ENCODE measurements at regions of chr5 and their contacts with region 1.

Region 1: GRCh38 chr5:115377468-115378217 is 81.2 kb upstream of the CCDC112 start:
- DNase-seq: no peak
- ATAC-seq: peak; percentile 73 to 78
- H3K4me3 ChIP-seq: no peak overlapping the region
- H3K27ac ChIP-seq: no peak overlapping the region
- H3K4me1 ChIP-seq: no peaks in the 10 kb centered on the region
- H3K27me3 ChIP-seq: no peaks in the 10 kb centered on the region

Region 2: GRCh38 chr5:115289104-115289503 is 88.5 kb before region 1 on chr5:
- intact Hi-C with region 1: no loop called
- DNase-seq: no peak
- ATAC-seq: no peak
- H3K4me3 ChIP-seq: no peak overlapping the region
- H3K27ac ChIP-seq: no peak overlapping the region
- H3K4me1 ChIP-seq: no peaks in the 10 kb centered on the region
- H3K27me3 ChIP-seq: no peaks in the 10 kb centered on the region

Region 3: DNA sequence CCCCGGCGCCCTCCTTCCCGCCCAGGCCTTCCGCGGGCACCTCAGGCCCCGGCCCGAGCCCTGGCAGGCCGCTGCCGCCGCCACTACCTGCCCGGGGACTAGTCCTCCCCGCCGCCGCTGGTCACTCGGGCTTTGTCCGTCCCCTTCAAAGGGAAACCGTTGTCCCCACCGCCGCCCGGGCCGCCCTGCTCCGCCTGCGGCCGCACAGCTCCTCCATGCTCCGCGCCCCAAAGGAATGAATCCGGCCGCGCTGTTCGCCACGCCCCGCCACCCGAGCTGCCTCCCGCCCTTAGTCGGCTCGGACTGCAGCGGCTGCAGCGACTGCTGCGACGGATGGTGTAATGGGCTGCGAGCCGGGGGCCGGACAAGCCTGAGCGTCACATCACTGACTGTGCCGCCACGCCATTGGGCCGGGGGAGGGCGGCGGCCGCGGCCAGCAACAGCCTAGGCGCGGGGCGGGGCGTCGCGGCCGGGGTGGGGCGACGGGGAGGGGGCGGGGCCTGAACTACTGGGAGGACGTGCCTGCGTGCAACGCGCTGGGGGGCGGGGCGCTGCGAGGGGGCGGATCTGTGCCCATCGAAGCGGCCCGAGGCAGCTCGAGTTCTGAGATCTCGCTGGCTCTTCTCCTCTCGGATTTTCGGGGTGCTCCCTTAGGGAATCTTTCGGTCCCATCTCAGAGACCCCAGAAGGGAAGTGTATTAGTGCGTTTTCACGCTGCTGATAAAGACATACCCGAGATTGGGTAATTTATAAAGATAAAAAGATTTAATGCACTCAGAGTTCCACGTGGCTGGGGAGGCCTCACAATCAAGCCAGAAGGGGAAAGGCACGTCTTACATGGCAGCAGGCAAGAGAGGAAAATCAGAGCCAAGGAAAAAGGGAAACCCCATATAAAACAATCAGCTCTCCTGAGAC is 167.1 kb after region 1 on chr5 and contains the start of gene FEM1C:
- intact Hi-C with region 1: loop called in 1 of 4 experiments (anchors 5 kb)
- DNase-seq: peak; percentile 98 to 99 (median 99)
- ATAC-seq: peak; percentile 99
- H3K4me3 ChIP-seq: peak within 1 kb of the TSS; percentile 72
- H3K27ac ChIP-seq: peak within 1 kb of the TSS; percentile 95
- H3K4me1 ChIP-seq: no peaks in the 10 kb centered on the region
- H3K27me3 ChIP-seq: no peaks in the 10 kb centered on the region
- total RNA-seq, gene FEM1C: 19.3 to 29.5 (median 22.1) TPM

Region 4: GRCh38 chr5:115571441-115571878 is 193.8 kb after region 1 on chr5:
- intact Hi-C with region 1: loop called in 3 of 4 experiments (anchors 5 to 10 kb)
- DNase-seq: peak in 2 of 3 donors; percentile 17 to 28
- ATAC-seq: peak; percentile 88 to 94
- H3K4me3 ChIP-seq: no peak overlapping the region
- H3K27ac ChIP-seq: no peak overlapping the region
- H3K4me1 ChIP-seq: no peaks in the 10 kb centered on the region
- H3K27me3 ChIP-seq: no peaks in the 10 kb centered on the region

Region 5: GRCh38 chr5:115579747-115580173 is 202.1 kb after region 1 on chr5:
- intact Hi-C with region 1: loop called (anchors 5 to 10 kb)
- DNase-seq: no peak
- ATAC-seq: no peak
- H3K4me3 ChIP-seq: no peak overlapping the region
- H3K27ac ChIP-seq: no peak overlapping the region
- H3K4me1 ChIP-seq: peaks cover 3% of the 10 kb centered on the region
- H3K27me3 ChIP-seq: no peaks in the 10 kb centered on the region

Region 6: DNA sequence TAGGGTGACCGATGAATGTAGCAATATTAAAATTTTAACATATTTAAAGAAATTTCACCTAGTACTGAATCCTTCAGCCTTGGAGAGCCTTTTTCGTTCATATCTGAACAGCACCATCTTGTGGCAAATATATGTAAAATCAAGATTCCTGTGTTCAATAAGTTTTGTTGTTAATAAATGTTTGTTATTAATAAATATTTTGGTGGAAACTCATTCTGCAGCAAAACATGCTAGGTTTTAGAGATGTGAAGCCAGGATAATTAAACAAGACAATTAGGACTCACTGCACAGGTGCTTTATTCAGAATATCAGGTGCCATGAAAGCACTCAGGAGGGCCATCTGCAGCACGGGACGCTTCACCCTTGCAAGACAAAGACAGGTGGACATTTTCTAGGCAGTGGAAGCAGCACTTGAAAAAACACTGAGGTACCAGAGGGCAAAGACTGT is 209.0 kb after region 1 on chr5:
- intact Hi-C with region 1: loop called in 2 of 4 experiments (anchors 5 to 10 kb)
- DNase-seq: no peak
- ATAC-seq: no peak
- H3K4me3 ChIP-seq: no peak overlapping the region
- H3K27ac ChIP-seq: no peak overlapping the region
- H3K4me1 ChIP-seq: peaks cover 5% of the 10 kb centered on the region
- H3K27me3 ChIP-seq: no peaks in the 10 kb centered on the region

Region 7: DNA sequence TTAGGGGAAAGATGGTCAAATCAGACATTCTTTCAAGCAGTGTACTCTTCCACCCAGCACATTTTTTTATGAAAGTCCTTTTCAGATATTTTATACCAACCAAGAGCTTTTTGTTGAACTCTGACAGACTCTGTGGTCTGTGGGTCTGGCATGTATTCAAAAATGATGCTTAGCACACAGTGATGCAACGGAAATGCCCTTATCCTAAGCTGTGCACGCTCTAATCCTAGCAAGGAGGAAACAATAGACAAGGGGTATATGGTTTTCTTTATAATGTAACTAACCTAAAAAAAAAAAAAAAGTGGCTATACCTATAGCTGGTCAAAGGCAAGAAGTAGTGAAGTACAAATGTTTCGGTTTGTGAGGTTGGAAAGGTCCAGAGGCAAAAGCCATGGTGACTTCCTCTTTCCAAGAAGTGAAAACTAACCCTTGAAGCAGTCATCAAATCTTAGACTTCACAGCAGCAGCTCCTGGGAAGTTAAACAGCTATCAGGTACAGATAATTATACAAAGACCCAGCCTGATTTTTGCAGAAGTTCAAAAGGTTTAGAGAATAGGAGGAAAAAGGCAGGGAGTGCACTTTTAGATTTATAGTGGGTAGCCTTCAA is 1114.5 kb after region 1 on chr5:
- intact Hi-C with region 1: no loop called
- DNase-seq: no peak
- ATAC-seq: peak; percentile 60 to 68
- H3K4me3 ChIP-seq: no peak overlapping the region
- H3K27ac ChIP-seq: no peak overlapping the region
- H3K4me1 ChIP-seq: no peaks in the 10 kb centered on the region
- H3K27me3 ChIP-seq: no peaks in the 10 kb centered on the region